MCF 10A (cell line): ENCODE measurements at regions of chr20 and their contacts with region 1.

Region 1: GRCh38 chr20:4135385-4136077 is 120.2 kb upstream of the RNF24 start:
- DNase-seq: peak; percentile 99
- H3K4me3 Mint-ChIP-seq: no peak overlapping the region
- H3K27ac Mint-ChIP-seq: peak overlapping the region; percentile 5
- H3K4me1 Mint-ChIP-seq: peaks cover 36% of the 10 kb centered on the region
- H3K27me3 Mint-ChIP-seq: no peaks in the 10 kb centered on the region
- CTCF ChIP-seq: no peak

Region 2: GRCh38 chr20:4119854-4120209 is 15.7 kb before region 1 on chr20:
- CTCF ChIA-PET with region 1: interaction called, 4 read pairs
- POLR2A ChIA-PET with region 1: interaction called, 16 read pairs
- intact Hi-C with region 1: loop called (anchors 1 kb)
- DNase-seq: peak; percentile 80
- H3K4me3 Mint-ChIP-seq: peak overlapping the region; percentile 57
- H3K27ac Mint-ChIP-seq: peak overlapping the region; percentile 88
- H3K4me1 Mint-ChIP-seq: peaks cover 23% of the 10 kb centered on the region
- H3K27me3 Mint-ChIP-seq: no peaks in the 10 kb centered on the region
- CTCF ChIP-seq: no peak

Region 3: GRCh38 chr20:4160761-4161305 is 25.3 kb after region 1 on chr20:
- CTCF ChIA-PET with region 1: interaction called, 4 read pairs
- POLR2A ChIA-PET with region 1: interaction called, 10 read pairs
- intact Hi-C with region 1: no loop called
- DNase-seq: peak; percentile 77
- H3K4me3 Mint-ChIP-seq: peak overlapping the region; percentile 23
- H3K27ac Mint-ChIP-seq: peak overlapping the region; percentile 76
- H3K4me1 Mint-ChIP-seq: peaks cover 50% of the 10 kb centered on the region
- H3K27me3 Mint-ChIP-seq: no peaks in the 10 kb centered on the region
- CTCF ChIP-seq: no peak